Natural killer cell (primary cell): ENCODE measurements at regions of chr13 and their contacts with region 1.

Region 1: GRCh38 chr13:59121507-59121906 is 1042.2 kb downstream of the DIAPH3 start:
- DNase-seq: no peak
- ATAC-seq: no peak
- H3K4me3 ChIP-seq: no peak overlapping the region
- H3K4me3 Mint-ChIP-seq: no peak overlapping the region
- H3K27ac ChIP-seq: no peak overlapping the region
- H3K27ac Mint-ChIP-seq: no peak overlapping the region
- H3K4me1 ChIP-seq: no peaks in the 10 kb centered on the region
- H3K4me1 Mint-ChIP-seq: no peaks in the 10 kb centered on the region
- H3K27me3 ChIP-seq: no peaks in the 10 kb centered on the region
- H3K27me3 Mint-ChIP-seq: no peaks in the 10 kb centered on the region
- CTCF ChIP-seq: no peak

Region 2: GRCh38 chr13:59133903-59134302 is 12.4 kb after region 1 on chr13:
- intact Hi-C with region 1: loop called (anchors 1 kb)
- DNase-seq: no peak
- ATAC-seq: no peak
- H3K4me3 ChIP-seq: no peak overlapping the region
- H3K4me3 Mint-ChIP-seq: no peak overlapping the region
- H3K27ac ChIP-seq: no peak overlapping the region
- H3K27ac Mint-ChIP-seq: no peak overlapping the region
- H3K4me1 ChIP-seq: no peaks in the 10 kb centered on the region
- H3K4me1 Mint-ChIP-seq: no peaks in the 10 kb centered on the region
- H3K27me3 ChIP-seq: no peaks in the 10 kb centered on the region
- H3K27me3 Mint-ChIP-seq: no peaks in the 10 kb centered on the region
- CTCF ChIP-seq: no peak

Region 3: GRCh38 chr13:59182241-59182640 is 60.7 kb after region 1 on chr13:
- intact Hi-C with region 1: no loop called
- DNase-seq: no peak
- ATAC-seq: no peak
- H3K4me3 ChIP-seq: no peak overlapping the region
- H3K4me3 Mint-ChIP-seq: no peak overlapping the region
- H3K27ac ChIP-seq: no peak overlapping the region
- H3K27ac Mint-ChIP-seq: no peak overlapping the region
- H3K4me1 ChIP-seq: no peaks in the 10 kb centered on the region
- H3K4me1 Mint-ChIP-seq: no peaks in the 10 kb centered on the region
- H3K27me3 ChIP-seq: no peaks in the 10 kb centered on the region
- H3K27me3 Mint-ChIP-seq: no peaks in the 10 kb centered on the region
- CTCF ChIP-seq: no peak